ENCODE measurements at regions of chr18 and their contacts with region 1.

Region 1: GRCh38 chr18:50374753-50375391 is at the start of gene SKA1:
- DNase-seq: peak; percentile 95
- H3K4me3 Mint-ChIP-seq: peak within 1 kb of the TSS; percentile 87
- H3K27ac Mint-ChIP-seq: peak within 1 kb of the TSS; percentile 77
- H3K4me1 Mint-ChIP-seq: no peaks in the 10 kb centered on the region
- H3K27me3 Mint-ChIP-seq: peaks cover 5% of the 10 kb centered on the region
- total RNA-seq, gene SKA1: 44.2 to 46.0 TPM

Region 2: DNA sequence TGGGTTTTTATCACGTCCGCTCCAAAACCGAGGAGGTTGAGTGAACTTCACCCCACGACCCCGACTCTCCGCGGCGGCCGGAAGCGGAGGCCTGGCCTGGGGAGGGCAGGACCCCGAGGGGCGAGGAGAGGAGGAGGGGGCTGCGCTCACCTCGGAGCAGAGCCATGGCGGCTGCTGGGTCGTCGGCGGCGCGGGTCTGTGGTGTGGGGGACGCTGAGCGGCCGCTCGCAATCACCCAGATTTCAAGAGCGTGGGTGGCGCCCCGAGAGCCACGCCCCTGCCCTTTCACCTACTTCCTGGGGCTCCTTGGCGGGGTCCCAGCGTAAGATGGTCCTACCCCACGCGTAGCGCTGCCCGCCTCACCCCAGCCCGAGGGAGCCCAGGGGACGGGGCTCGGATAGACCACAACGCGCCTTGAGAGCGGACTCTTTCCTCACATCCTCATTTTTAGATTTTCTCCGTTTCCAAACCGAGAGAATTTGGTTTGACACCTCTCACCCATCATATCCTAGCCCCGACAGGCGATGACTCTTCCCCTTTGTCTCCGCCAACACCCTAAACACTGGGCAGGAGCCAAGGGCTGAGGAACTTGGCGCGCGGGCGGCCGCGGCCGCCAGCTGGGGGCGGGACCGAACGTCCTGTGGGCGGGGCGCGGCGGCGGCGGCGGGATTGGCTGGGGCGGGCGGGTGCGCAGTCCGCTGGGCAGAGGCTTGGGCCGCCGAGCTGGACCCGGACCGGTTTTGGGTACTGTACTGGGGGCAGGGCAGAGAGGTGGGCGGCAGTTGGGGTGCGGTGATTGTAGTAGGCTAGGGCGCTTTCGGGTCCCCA is 561.3 kb before region 1 on chr18 and contains the start of gene ACAA2:
- CTCF ChIA-PET with region 1: no interaction called
- POLR2A ChIA-PET with region 1: no interaction called
- intact Hi-C with region 1: loop called (anchors 10 kb)
- DNase-seq: peak; percentile 90
- H3K4me3 Mint-ChIP-seq: peak within 1 kb of the TSS; percentile 91
- H3K27ac Mint-ChIP-seq: peak within 1 kb of the TSS; percentile 95
- H3K4me1 Mint-ChIP-seq: peaks cover 45% of the 10 kb centered on the region
- H3K27me3 Mint-ChIP-seq: no peaks in the 10 kb centered on the region
- total RNA-seq, gene ACAA2: 77.9 to 78.4 TPM

Region 3: DNA sequence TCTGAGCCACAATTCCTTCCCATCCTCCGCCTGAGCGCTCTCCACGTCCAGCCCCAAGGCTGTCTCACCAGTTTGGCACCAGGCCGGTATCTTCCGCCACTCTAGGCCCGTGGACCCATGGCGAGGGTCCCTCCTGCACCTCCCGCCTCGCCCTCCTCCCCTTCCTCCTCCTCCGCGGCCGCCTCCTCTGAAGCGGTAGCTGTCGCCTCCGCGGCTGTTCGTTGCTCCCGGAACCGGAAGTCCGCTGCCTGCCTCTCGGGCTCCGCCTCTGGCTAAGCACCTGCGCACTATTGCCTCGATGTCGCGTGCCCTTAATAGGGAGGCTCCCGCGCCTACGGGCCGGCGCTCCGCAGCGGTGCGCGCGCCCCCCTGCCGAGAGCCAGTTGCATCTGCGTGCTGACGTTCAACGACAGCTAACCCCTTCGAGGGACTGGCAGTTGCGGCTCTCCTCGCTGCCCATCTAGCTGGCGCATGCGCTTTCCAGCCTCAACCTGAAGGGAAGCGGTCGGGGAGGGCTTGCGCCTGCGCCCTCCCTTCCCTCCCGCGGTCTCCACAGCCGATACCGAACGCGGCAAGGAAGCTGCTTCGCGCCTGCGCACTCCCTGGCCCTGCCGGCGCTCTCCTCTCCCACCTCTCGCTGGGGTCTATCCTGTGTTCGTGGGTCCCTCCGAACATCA is 93.4 kb before region 1 on chr18 and contains the start of gene MBD1:
- CTCF ChIA-PET with region 1: no interaction called
- POLR2A ChIA-PET with region 1: no interaction called
- intact Hi-C with region 1: loop called (anchors 1 kb)
- DNase-seq: peak; percentile 97
- H3K4me3 Mint-ChIP-seq: peak within 1 kb of the TSS; percentile 95
- H3K27ac Mint-ChIP-seq: peak within 1 kb of the TSS; percentile 90
- H3K4me1 Mint-ChIP-seq: peaks cover 35% of the 10 kb centered on the region
- H3K27me3 Mint-ChIP-seq: no peaks in the 10 kb centered on the region
- total RNA-seq, gene MBD1: 69.4 to 70.5 TPM

Region 4: GRCh38 chr18:50307738-50308470 is 67.0 kb before region 1 on chr18:
- CTCF ChIA-PET with region 1: no interaction called
- POLR2A ChIA-PET with region 1: no interaction called
- intact Hi-C with region 1: loop called (anchors 1 kb)
- DNase-seq: peak; percentile 93
- H3K4me3 Mint-ChIP-seq: peak overlapping the region; percentile 83
- H3K27ac Mint-ChIP-seq: no peak overlapping the region
- H3K4me1 Mint-ChIP-seq: peaks cover 4% of the 10 kb centered on the region
- H3K27me3 Mint-ChIP-seq: peaks cover 7% of the 10 kb centered on the region